B cell (primary cell): ENCODE measurements at regions of chrX and their contacts with region 1.

Region 1: GRCh38 chrX:22081475-22082092 is 49.5 kb downstream of the PHEX start:
- DNase-seq: peak; percentile 57
- ATAC-seq: peak; percentile 24
- H3K4me3 ChIP-seq: no peak overlapping the region
- H3K4me3 Mint-ChIP-seq: no peak overlapping the region
- H3K27ac ChIP-seq: no peak overlapping the region
- H3K27ac Mint-ChIP-seq: peak overlapping the region; percentile 26
- H3K4me1 ChIP-seq: no peaks in the 10 kb centered on the region
- H3K4me1 Mint-ChIP-seq: peaks cover 5% of the 10 kb centered on the region
- H3K27me3 ChIP-seq: no peaks in the 10 kb centered on the region
- H3K27me3 Mint-ChIP-seq: no peaks in the 10 kb centered on the region
- CTCF ChIP-seq: peak; percentile 71

Region 2: DNA sequence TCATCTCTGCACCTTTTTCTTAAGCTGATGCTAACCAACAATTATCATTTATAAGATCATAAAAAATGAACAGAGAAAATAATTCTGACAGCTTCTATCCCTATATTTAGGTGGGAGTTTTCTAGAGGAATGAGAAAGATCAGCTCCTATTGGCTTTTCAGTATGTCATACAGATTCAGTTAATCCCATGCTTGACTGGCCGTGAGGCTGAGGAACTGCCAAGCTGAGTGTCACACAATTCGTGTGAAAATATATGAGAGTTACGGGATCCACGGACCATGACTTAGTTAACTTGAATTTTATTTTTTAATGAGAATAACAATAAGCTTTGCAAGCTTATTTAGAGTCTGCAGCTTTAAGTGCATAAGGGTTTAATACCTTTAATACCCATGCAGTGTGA is 12.0 kb before region 1 on chrX:
- CTCF ChIA-PET with region 1: interaction called, 17 read pairs
- POLR2A ChIA-PET with region 1: no interaction called
- intact Hi-C with region 1: no loop called
- DNase-seq: no peak
- ATAC-seq: no peak
- H3K4me3 ChIP-seq: no peak overlapping the region
- H3K4me3 Mint-ChIP-seq: no peak overlapping the region
- H3K27ac ChIP-seq: no peak overlapping the region
- H3K27ac Mint-ChIP-seq: no peak overlapping the region
- H3K4me1 ChIP-seq: peaks cover 0 to 17% of the 10 kb centered on the region in 2 donors
- H3K4me1 Mint-ChIP-seq: peaks cover 23% of the 10 kb centered on the region
- H3K27me3 ChIP-seq: no peaks in the 10 kb centered on the region
- H3K27me3 Mint-ChIP-seq: no peaks in the 10 kb centered on the region
- CTCF ChIP-seq: no peak